Panc1 (cell line): ENCODE measurements at regions of chr18 and their contacts with region 1.

Region 1: GRCh38 chr18:32552421-32553030 is 81.8 kb upstream of the GAREM1 start:
- DNase-seq: peak; percentile 35
- ATAC-seq: peak; percentile 66; the same call in 1 of the 2 replicates
- H3K4me3 ChIP-seq: no peak overlapping the region
- H3K27ac ChIP-seq: no peak overlapping the region
- H3K4me1 ChIP-seq: no peaks in the 10 kb centered on the region
- H3K27me3 ChIP-seq: no peaks in the 10 kb centered on the region
- CTCF ChIP-seq: peak; percentile 67

Region 2: GRCh38 chr18:32036506-32037180 is 515.9 kb before region 1 on chr18:
- CTCF ChIA-PET with region 1: no interaction called
- POLR2A ChIA-PET with region 1: no interaction called
- in situ Hi-C with region 1: no loop called
- intact Hi-C with region 1: no loop called
- DNase-seq: no peak
- ATAC-seq: no peak
- H3K4me3 ChIP-seq: no peak overlapping the region
- H3K27ac ChIP-seq: no peak overlapping the region
- H3K4me1 ChIP-seq: no peaks in the 10 kb centered on the region
- H3K27me3 ChIP-seq: no peaks in the 10 kb centered on the region
- CTCF ChIP-seq: no peak

Region 3: DNA sequence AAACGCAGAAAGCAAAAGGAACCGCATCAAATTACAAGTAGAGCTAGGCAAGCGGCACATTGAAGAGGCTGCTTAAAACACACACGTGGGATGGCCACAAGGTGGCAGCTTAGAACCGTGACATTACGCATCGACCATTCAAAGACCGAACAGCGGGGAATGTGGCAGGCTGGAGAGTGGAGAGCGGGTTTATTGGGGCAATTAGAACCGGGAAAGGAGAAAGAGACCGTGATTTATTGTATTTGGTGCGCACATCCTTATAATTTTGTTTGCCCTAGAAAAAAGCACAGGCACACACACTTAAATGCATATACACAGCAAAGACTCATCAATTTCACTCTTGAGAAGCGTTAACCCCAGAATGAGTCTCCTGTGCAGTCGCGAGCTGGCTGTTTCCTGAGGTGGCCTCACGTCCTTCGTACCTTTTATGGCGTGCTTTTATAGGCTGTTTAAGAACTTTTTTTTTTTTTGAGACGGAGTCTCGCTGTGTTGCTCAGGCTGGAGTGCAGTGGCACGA is 394.4 kb before region 1 on chr18:
- CTCF ChIA-PET with region 1: interaction called, 11 read pairs
- POLR2A ChIA-PET with region 1: no interaction called
- in situ Hi-C with region 1: no loop called
- intact Hi-C with region 1: loop called (anchors 2 kb)
- DNase-seq: peak; percentile 57
- ATAC-seq: peak; percentile 100
- H3K4me3 ChIP-seq: peak overlapping the region; percentile 15 to 43; a peak in 3 of 4 replicates
- H3K27ac ChIP-seq: no peak overlapping the region
- H3K4me1 ChIP-seq: no peaks in the 10 kb centered on the region
- H3K27me3 ChIP-seq: no peaks in the 10 kb centered on the region
- CTCF ChIP-seq: peak; percentile 82

Region 4: DNA sequence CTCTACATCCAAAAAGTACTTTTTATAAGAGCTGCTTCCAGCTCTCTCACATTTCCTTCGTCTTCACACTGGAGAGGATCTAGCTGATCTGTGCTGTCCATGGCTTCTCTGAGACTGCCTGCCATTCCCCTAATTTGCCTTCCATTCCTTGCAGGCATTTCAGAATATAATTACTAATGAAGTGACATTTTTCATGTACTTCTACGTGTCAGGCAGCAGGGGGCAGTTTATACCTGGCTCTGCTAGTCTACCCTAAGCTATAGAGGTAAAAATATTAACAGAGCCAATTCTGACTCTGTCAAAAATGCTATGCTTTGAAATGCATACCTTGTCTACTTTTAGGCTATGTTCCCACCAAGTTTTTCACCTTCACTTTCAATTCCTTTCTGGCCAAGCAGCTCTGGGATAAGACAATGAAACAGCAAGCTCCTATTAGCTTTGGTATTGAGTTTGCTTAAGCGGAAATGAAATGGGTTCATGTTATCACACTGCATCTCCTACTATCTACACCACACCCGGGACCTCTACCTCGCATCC is 280.8 kb before region 1 on chr18:
- CTCF ChIA-PET with region 1: interaction called, 3 read pairs
- POLR2A ChIA-PET with region 1: no interaction called
- in situ Hi-C with region 1: no loop called
- intact Hi-C with region 1: loop called (anchors 5 kb)
- DNase-seq: peak; percentile 5
- ATAC-seq: peak; percentile 74; the same call in 1 of the 2 replicates
- H3K4me3 ChIP-seq: no peak overlapping the region
- H3K27ac ChIP-seq: no peak overlapping the region
- H3K4me1 ChIP-seq: no peaks in the 10 kb centered on the region
- H3K27me3 ChIP-seq: no peaks in the 10 kb centered on the region
- CTCF ChIP-seq: peak; percentile 73

Region 5: DNA sequence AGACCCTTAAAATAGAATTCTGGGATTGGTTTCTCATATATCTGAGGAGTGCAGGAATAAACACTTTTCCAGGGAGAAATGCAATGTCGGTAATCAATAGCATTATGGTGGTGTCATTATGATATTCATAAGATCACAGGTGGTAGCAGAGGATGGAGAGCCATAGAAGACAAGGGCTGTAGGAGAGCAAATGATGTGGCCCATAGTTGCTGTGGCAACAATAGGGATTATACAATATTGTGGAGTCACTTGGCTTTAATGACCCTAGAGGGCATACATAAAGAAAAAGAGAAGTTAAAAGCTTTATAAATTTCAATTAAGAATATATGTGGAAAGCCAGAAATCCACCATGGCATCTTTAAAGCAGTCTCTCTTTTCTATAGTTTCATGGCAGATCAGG is 58.4 kb before region 1 on chr18:
- CTCF ChIA-PET with region 1: no interaction called
- POLR2A ChIA-PET with region 1: no interaction called
- in situ Hi-C with region 1: no loop called
- intact Hi-C with region 1: no loop called
- DNase-seq: no peak
- ATAC-seq: no peak
- H3K4me3 ChIP-seq: no peak overlapping the region
- H3K27ac ChIP-seq: no peak overlapping the region
- H3K4me1 ChIP-seq: no peaks in the 10 kb centered on the region
- H3K27me3 ChIP-seq: 0 out of 2 replicates have a peak, but pooled peaks cover 2% of the 10 kb centered on the region
- CTCF ChIP-seq: peak; percentile 14; the same call in 1 of the 2 replicates